Left cardiac atrium (tissue), 4 donors: ENCODE measurements at regions of chr2 and their contacts with region 1.

Region 1: GRCh38 chr2:8761529-8762164 is 75.8 kb downstream of the KIDINS220 start:
- DNase-seq: no peak
- ATAC-seq: no peak

Region 2: GRCh38 chr2:7203055-7203467 is 1558.6 kb before region 1 on chr2:
- intact Hi-C with region 1: loop called in 1 of 2 experiments (anchors 10 kb)
- DNase-seq: no peak
- ATAC-seq: peak; percentile 55 to 57

Region 3: GRCh38 chr2:8851811-8852560 is 90.3 kb after region 1 on chr2:
- intact Hi-C with region 1: no loop called
- DNase-seq: peak; percentile 29
- ATAC-seq: peak in 1 of 2 donors; percentile 71

Region 4: DNA sequence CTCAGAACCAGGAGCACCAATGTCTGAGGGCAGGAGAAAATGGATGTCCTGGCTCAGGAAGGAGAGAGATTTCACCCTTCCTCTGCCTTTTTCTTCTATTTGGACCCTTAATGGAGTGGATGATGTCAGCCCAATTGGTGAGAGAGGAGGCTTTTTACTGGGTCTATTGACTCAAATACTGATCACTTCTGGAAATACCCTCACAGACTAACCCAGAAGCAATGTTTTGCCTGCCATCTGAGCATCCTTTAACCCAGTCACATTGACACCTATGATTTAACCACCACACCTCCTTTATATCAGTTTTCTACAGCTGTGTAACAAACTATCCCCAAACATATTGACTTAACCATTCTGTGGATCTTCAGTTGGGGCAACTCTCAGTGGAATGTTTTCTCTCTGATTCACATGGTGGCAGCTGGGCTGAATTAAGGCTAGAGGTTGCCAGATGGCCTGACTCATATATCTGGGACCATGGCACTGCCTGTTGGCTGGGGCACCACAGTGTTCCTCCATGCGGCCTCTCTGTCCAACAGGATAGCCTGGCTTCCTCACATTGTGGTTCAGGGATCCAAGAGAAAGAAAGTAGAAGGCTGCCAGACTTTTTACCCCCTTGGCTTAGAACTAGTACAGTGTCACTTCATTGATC is 260.0 kb after region 1 on chr2:
- intact Hi-C with region 1: no loop called
- DNase-seq: no peak
- ATAC-seq: no peak

Region 5: GRCh38 chr2:10006236-10007161 is 1244.9 kb after region 1 on chr2:
- intact Hi-C with region 1: no loop called
- DNase-seq: peak; percentile 64
- ATAC-seq: peak; percentile 66 to 71